ENCODE measurements at regions of chr14 and their contacts with region 1.

Region 1: GRCh38 chr14:95534299-95535225 is at the start of gene GLRX5:
- DNase-seq: peak; percentile 99
- ATAC-seq: peak; percentile 92
- H3K4me3 Mint-ChIP-seq: peak within 1 kb of the TSS; percentile 98
- H3K27ac Mint-ChIP-seq: peak within 1 kb of the TSS; percentile 93
- H3K4me1 Mint-ChIP-seq: peaks cover 67% of the 10 kb centered on the region
- H3K27me3 Mint-ChIP-seq: no peaks in the 10 kb centered on the region
- CTCF ChIP-seq: no peak
- total RNA-seq, gene GLRX5: 47.3 to 47.8 TPM

Region 2: DNA sequence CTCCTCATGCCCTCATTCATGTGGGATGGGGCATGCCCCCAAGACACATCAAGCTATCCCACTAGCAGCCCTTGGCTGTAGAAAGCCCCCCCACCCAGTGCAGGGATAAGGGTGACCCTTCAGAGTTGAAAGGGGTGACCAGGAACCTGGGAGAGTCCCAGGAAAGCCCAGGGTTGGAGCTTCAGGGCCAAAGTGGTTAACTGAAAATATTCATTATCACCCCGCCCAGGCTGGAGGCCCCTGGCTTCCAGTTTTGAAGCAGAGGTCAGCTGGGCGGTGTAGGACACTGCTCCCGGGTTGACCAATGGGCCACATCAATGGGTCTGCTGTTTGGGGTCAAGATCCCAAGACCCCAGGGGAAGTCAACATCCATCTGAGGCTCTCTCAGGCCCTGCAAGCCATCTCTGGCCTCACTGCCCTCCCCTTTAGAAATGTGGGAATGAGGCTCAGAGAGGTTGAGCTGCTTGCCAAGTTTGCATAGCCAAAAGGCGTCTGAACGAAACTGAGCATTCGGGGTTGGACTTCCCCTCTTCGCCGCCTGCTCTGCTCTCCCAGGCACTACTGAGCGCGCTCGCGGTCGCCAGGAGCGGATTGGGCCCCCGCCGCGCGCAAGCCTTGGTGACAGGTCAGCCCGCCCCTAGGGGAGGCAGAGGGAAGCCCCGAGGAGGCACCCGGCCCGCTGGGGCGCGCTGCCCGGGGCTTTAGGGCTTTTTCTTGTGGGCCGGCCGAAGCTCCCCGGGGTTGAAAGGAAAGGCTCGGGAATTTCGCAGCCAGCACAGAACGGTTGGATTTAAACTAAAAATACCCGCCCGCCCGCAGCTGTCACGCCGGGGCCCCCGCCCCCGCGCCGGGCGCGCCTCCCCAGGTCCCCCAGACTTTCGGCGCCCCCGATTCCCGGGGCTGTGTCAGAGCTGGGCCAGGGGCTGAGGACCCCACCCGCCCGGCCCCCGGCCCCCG is 18.7 kb before region 1 on chr14:
- CTCF ChIA-PET with region 1: interaction called, 4 read pairs
- POLR2A ChIA-PET with region 1: interaction called, 88 read pairs
- intact Hi-C with region 1: no loop called
- DNase-seq: peak; percentile 92
- ATAC-seq: peak; percentile 85
- H3K4me3 Mint-ChIP-seq: peak overlapping the region; percentile 93
- H3K27ac Mint-ChIP-seq: peak overlapping the region; percentile 92
- H3K4me1 Mint-ChIP-seq: peaks cover 67% of the 10 kb centered on the region
- H3K27me3 Mint-ChIP-seq: no peaks in the 10 kb centered on the region
- CTCF ChIP-seq: peak; percentile 54

Region 3: GRCh38 chr14:95697764-95698163 is 163.2 kb after region 1 on chr14:
- CTCF ChIA-PET with region 1: no interaction called
- POLR2A ChIA-PET with region 1: no interaction called
- intact Hi-C with region 1: no loop called
- DNase-seq: no peak
- ATAC-seq: no peak
- H3K4me3 Mint-ChIP-seq: no peak overlapping the region
- H3K27ac Mint-ChIP-seq: no peak overlapping the region
- H3K4me1 Mint-ChIP-seq: peaks cover 6% of the 10 kb centered on the region
- H3K27me3 Mint-ChIP-seq: peaks cover 23% of the 10 kb centered on the region
- CTCF ChIP-seq: no peak